Activated naive CD4-positive, alpha-beta T cell treated with anti-CD3 and anti-CD28 coated beads for 36 hours (primary cell): ENCODE measurements at regions of chr5 and their contacts with region 1.

Region 1: GRCh38 chr5:42583322-42583721 is 160.1 kb downstream of the GHR start:
- DNase-seq: peak; percentile 50
- H3K4me3 Mint-ChIP-seq: no peak overlapping the region
- H3K27ac Mint-ChIP-seq: no peak overlapping the region
- H3K4me1 Mint-ChIP-seq: no peaks in the 10 kb centered on the region
- H3K27me3 Mint-ChIP-seq: peaks cover 14% of the 10 kb centered on the region

Region 2: GRCh38 chr5:41863871-41864486 is 719.3 kb before region 1 on chr5:
- CTCF ChIA-PET with region 1: no interaction called
- intact Hi-C with region 1: loop called (anchors 2 kb)
- DNase-seq: no peak
- H3K4me3 Mint-ChIP-seq: peak overlapping the region; percentile 10
- H3K27ac Mint-ChIP-seq: peak overlapping the region; percentile 76
- H3K4me1 Mint-ChIP-seq: peaks cover 64% of the 10 kb centered on the region
- H3K27me3 Mint-ChIP-seq: no peaks in the 10 kb centered on the region

Region 3: DNA sequence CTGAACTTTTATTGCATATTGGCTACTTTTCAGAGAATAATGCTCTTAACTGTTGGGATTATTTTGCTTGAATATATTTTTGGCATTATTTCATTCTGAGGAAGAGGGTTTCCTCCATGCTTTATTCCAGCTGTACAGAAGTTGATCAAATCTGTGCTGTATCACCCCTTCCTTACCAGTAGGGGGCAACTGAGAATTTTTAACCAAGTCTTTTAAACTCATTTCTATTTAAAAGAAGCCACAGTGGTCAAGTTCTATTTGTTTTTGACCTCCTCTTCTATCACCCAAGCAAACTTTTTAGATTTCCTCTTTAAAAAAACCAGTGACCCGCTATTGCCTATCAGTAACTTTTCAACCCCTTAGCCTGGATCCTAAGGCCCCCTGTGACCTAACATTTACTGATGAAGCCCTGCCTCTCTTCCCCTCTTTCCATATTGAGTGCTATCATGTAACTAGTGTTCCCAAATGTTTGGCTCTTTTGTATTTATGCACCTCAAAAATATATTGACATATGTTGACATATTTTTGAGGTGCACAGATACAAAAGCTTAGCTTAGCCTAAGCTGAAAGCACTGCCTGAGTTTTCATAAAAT is 577.7 kb before region 1 on chr5:
- CTCF ChIA-PET with region 1: no interaction called
- intact Hi-C with region 1: loop called (anchors 5 kb)
- DNase-seq: no peak
- H3K4me3 Mint-ChIP-seq: no peak overlapping the region
- H3K27ac Mint-ChIP-seq: no peak overlapping the region
- H3K4me1 Mint-ChIP-seq: no peaks in the 10 kb centered on the region
- H3K27me3 Mint-ChIP-seq: peaks cover 2% of the 10 kb centered on the region

Region 4: GRCh38 chr5:42423285-42424165 is 159.8 kb before region 1 on chr5 and contains the start of gene GHR:
- CTCF ChIA-PET with region 1: interaction called, 3 read pairs
- intact Hi-C with region 1: loop called (anchors 2 kb)
- DNase-seq: peak; percentile 40
- H3K4me3 Mint-ChIP-seq: no peak within 1 kb of the TSS
- H3K27ac Mint-ChIP-seq: no peak within 1 kb of the TSS
- H3K4me1 Mint-ChIP-seq: no peaks in the 10 kb centered on the region
- H3K27me3 Mint-ChIP-seq: peaks cover 22% of the 10 kb centered on the region
- total RNA-seq, gene GHR: not detected

Region 5: DNA sequence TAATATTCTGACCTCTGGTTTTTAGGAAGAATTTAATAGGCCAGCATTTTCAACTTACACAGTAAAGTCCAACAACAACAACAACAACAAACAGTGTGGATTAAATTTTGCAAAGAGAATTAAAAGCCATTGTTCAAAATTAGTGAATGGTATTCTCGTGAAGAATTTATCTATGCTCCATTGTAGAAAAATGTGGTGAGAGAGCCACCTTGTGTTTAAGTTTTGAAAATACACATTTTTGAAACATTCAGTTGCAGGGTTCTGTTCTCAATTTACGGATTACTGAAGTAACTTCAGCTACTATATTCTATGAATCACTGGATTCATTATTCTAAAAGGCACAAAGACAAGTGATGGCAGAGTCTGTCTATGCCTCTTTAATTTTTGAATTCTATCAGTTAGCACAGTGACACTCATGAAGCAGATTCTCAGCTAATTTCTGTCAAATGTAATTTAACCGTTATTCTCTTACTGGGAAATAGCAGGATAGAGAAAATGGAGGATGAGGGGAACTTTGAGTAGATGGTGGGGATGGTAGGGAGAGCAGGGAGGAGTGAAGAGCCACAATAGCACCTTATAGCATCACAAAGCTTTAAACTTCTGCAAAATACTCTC is 184.3 kb after region 1 on chr5:
- CTCF ChIA-PET with region 1: interaction called, 3 read pairs
- intact Hi-C with region 1: loop called (anchors 2 kb)
- DNase-seq: no peak
- H3K4me3 Mint-ChIP-seq: no peak overlapping the region
- H3K27ac Mint-ChIP-seq: no peak overlapping the region
- H3K4me1 Mint-ChIP-seq: no peaks in the 10 kb centered on the region
- H3K27me3 Mint-ChIP-seq: peaks cover 7% of the 10 kb centered on the region

Region 6: DNA sequence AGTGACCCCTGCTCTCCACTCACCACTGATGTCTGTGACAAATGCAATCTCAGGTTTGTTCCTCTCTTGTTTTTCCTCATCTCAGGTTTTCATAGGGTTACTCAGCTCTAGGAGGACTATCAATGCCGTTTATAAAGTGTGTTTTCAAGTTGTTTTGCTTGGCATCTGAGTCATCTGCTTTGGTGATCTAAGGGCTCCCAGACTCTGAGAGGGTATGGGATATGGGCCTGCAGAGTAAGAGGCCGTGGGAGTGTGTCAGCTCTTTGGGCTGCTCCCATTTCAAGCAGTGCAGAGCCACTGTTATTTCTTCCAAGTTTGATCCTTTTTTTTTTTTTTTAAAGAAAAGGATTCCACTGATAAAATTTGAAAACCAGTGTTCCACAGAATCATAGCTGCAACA is 1065.9 kb after region 1 on chr5:
- CTCF ChIA-PET with region 1: no interaction called
- intact Hi-C with region 1: no loop called
- DNase-seq: no peak
- H3K4me3 Mint-ChIP-seq: no peak overlapping the region
- H3K27ac Mint-ChIP-seq: no peak overlapping the region
- H3K4me1 Mint-ChIP-seq: no peaks in the 10 kb centered on the region
- H3K27me3 Mint-ChIP-seq: no peaks in the 10 kb centered on the region